ENCODE measurements at regions of chr6 and their contacts with region 1.

Region 1: GRCh38 chr6:28136585-28137504 is 4.8 kb upstream of the ZKSCAN8 start:
- DNase-seq: peak; percentile 59 to 83 (median 67)
- H3K4me3 ChIP-seq: peak overlapping the region; percentile 91
- H3K4me3 Mint-ChIP-seq: peak overlapping the region; percentile 91 to 99 (median 97)
- H3K27ac ChIP-seq: peak overlapping the region; percentile 91
- H3K27ac Mint-ChIP-seq: peak overlapping the region; percentile 97 to 100 (median 99)
- H3K4me1 ChIP-seq: peaks cover 32% of the 10 kb centered on the region
- H3K4me1 Mint-ChIP-seq: peaks cover 62 to 81% (median 74%) of the 10 kb centered on the region in 3 donors
- H3K27me3 ChIP-seq: no peaks in the 10 kb centered on the region
- H3K27me3 Mint-ChIP-seq: no peaks in the 10 kb centered on the region

Region 2: GRCh38 chr6:27864906-27865849 is 271.7 kb before region 1 on chr6:
- CTCF ChIA-PET with region 1: no interaction called
- POLR2A ChIA-PET with region 1: interaction called, 10 read pairs
- DNase-seq: peak; percentile 42 to 89 (median 81)
- H3K4me3 ChIP-seq: peak overlapping the region; percentile 63
- H3K4me3 Mint-ChIP-seq: peak overlapping the region; percentile 93 to 99 (median 96)
- H3K27ac ChIP-seq: peak overlapping the region; percentile 83
- H3K27ac Mint-ChIP-seq: peak overlapping the region; percentile 87 to 99 (median 97)
- H3K4me1 ChIP-seq: peaks cover 25% of the 10 kb centered on the region
- H3K4me1 Mint-ChIP-seq: peaks cover 36 to 50% (median 45%) of the 10 kb centered on the region in 3 donors
- H3K27me3 ChIP-seq: no peaks in the 10 kb centered on the region
- H3K27me3 Mint-ChIP-seq: no peaks in the 10 kb centered on the region

Region 3: GRCh38 chr6:28104392-28105244 is 32.2 kb before region 1 on chr6:
- CTCF ChIA-PET with region 1: interaction called, 3 read pairs
- POLR2A ChIA-PET with region 1: interaction called, 12 read pairs
- DNase-seq: peak; percentile 77 to 89 (median 81)
- H3K4me3 ChIP-seq: peak overlapping the region; percentile 64
- H3K4me3 Mint-ChIP-seq: peak overlapping the region; percentile 91 to 94 (median 93)
- H3K27ac ChIP-seq: peak overlapping the region; percentile 78
- H3K27ac Mint-ChIP-seq: peak overlapping the region; percentile 81 to 97 (median 95)
- H3K4me1 ChIP-seq: no peaks in the 10 kb centered on the region
- H3K4me1 Mint-ChIP-seq: peaks cover 11 to 15% (median 11%) of the 10 kb centered on the region in 3 donors
- H3K27me3 ChIP-seq: no peaks in the 10 kb centered on the region
- H3K27me3 Mint-ChIP-seq: peaks cover 14 to 16% of the 10 kb centered on the region in 2 donors

Region 4: DNA sequence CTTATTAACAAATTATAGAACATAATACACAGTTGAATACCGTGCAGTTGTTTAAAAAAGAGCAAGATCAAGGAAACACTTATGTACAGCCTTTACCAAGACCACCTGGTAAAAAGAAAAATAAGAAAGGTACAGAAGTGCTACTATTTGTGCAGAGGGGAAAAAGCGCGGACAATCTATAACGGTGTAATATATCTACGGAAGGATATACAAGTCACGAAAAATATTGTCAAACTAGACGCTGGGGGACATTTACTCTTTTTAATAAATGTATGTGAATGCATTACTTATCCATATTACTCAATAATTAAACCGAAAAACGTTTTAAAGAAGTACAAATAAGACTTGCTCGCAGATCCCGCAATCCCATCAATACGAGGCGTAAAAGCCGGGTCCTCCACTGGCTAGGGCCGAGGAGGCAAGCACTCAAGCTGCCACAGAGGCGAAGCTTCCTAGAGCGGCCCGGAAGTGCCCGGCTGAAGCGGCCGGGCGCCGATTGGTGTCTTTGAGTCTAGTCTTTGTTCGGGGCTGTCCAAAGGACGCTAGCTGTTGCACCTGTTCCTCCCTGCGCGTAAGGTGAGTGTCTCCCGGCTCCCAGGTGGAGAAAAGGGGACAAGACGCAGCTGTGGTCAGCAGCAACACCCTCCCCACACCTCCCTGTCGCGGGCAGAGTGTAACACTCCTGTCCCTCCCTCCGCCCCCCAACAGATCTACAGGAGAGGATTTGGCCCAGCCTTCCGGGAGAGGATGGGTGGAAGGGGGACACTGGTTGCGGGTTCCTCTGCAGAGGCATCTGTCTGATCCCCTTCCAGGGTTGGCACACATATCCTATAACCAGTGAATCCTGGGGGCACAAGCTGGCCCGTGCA is 12.5 kb before region 1 on chr6 and contains the start of gene ZSCAN16:
- CTCF ChIA-PET with region 1: interaction called, 8 read pairs
- POLR2A ChIA-PET with region 1: interaction called, 26 read pairs
- DNase-seq: peak; percentile 59 to 83 (median 66)
- H3K4me3 ChIP-seq: peak within 1 kb of the TSS; percentile 81
- H3K4me3 Mint-ChIP-seq: peak within 1 kb of the TSS; percentile 94 to 98 (median 97)
- H3K27ac ChIP-seq: peak within 1 kb of the TSS; percentile 74
- H3K27ac Mint-ChIP-seq: peak within 1 kb of the TSS; percentile 90 to 99 (median 98)
- H3K4me1 ChIP-seq: peaks cover 20% of the 10 kb centered on the region
- H3K4me1 Mint-ChIP-seq: peaks cover 41 to 59% (median 59%) of the 10 kb centered on the region in 3 donors
- H3K27me3 ChIP-seq: no peaks in the 10 kb centered on the region
- H3K27me3 Mint-ChIP-seq: peaks cover 0 to 1% of the 10 kb centered on the region in 2 donors
- total RNA-seq, gene ZSCAN16: 5.3 to 5.8 TPM

Region 5: GRCh38 chr6:28355743-28356665 is 219.2 kb after region 1 on chr6:
- CTCF ChIA-PET with region 1: interaction called, 33 read pairs
- POLR2A ChIA-PET with region 1: interaction called, 6 read pairs
- DNase-seq: peak; percentile 34 to 70 (median 58)
- H3K4me3 ChIP-seq: peak overlapping the region; percentile 75
- H3K4me3 Mint-ChIP-seq: peak overlapping the region; percentile 74 to 95 (median 90)
- H3K27ac ChIP-seq: peak overlapping the region; percentile 49
- H3K27ac Mint-ChIP-seq: peak overlapping the region in 7 of 8 donors; percentile 51 to 95 (median 86)
- H3K4me1 ChIP-seq: peaks cover 18% of the 10 kb centered on the region
- H3K4me1 Mint-ChIP-seq: peaks cover 24 to 40% (median 30%) of the 10 kb centered on the region in 3 donors
- H3K27me3 ChIP-seq: no peaks in the 10 kb centered on the region
- H3K27me3 Mint-ChIP-seq: no peaks in the 10 kb centered on the region